Posterior vena cava (tissue), 2 donors: ENCODE measurements at regions of chr3 and their contacts with region 1.

Region 1: DNA sequence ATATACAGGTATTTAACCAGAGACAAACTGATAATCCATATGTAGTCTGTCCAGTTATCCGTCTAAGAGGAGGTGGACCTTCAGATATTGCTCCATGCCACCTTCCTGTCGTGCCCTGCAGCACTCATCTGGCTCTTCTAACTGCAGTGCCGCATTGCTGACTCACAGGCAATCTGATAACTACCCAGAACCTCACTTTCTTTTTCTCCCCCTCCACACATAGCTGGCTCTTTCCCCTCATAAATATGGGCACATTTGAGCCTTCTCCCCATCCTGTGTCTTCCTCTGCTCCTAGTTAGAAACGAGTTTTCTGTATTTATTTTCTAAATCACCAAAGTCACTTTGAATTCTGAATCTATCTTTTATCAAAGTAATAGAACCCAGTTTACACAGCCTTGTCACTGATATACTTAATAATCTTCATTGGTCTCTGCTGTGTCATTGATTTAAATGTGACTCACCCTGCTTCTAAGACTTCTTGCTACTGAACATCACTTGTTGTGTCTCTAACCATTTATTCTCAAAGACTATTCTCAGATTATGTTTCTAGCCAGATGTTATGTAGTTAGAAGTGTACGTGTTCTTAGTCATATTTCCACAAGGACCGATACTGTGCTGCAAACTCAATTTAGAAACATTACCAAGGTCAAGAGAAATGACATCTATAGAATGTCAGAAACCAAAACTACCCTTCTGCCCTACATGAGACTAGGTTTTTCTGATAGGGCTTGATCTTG is 17.4 kb upstream of the KCNMB2 start:
- DNase-seq: no peak

Region 2: GRCh38 chr3:177597311-177598096 is 921.3 kb before region 1 on chr3:
- intact Hi-C with region 1: loop called in 1 of 2 experiments (anchors 5 kb)
- DNase-seq: no peak

Region 3: DNA sequence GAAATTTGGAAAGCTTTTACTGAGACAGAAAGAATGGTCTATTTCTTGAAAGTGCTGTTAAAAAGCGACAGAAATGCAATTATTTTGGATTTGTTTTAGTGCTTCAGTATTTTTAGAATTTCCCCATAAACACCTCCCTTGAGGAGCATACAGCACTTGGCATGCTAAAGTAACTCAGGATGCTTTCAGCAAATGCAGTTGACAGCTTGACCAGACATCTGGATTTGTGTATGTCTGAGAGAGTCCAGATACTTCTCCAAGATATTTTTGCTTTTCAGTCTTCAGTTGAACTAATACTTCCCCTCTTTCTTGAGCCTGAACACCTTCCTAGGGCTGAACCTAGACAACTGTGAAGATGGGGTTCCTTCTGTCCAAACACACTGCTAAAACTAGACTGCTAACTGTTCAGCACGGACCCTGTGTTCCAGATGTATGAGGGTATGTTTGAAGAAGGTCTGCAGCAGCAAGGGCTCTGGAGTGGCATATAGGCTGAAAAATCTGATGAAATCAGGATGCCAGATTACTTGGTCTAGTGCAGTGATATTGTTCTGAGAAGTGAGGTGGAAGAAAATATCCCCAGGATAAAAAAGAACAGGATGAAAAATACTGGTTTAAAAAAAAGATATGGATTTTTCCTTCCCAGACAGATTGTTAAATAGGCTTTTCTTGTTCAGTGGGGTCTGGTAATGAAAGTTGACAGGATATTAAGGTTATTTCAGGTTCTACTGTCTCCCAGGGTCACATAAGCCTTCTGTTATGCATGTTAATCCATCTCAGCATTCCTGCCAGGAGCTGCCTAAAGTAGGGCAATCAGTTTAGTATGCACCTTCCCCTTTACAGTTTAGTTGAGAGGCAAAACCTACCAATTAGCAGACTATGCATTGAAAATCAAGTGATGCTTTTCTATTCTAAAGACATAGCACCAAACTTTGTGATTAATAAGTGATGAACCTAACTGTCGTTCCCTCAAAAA is 804.6 kb before region 1 on chr3:
- intact Hi-C with region 1: no loop called
- DNase-seq: no peak

Region 4: DNA sequence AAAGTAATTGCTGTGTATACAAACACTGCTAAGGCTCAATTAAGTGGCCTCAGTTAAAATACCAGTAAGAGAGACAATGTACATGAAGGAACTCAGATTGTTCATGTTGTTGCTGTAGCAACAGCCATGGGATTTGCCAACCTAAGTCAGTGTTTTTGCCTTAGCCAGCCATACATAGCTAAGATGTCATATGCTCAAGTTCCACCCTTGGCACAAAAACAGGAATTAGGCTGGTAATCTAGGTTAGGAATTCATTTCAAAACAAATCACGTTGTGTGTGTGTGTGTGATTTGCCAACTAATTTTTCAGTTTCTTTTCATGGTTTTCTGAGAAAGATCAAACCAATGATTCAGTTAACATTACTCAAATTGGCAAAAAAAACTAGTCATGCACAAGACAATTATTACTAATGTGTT is 126.3 kb before region 1 on chr3:
- intact Hi-C with region 1: no loop called
- DNase-seq: no peak

Region 5: GRCh38 chr3:178676942-178677790 is 158.3 kb after region 1 on chr3:
- intact Hi-C with region 1: no loop called
- DNase-seq: no peak